ENCODE measurements at regions of chr1 and their contacts with region 1.

Region 1: DNA sequence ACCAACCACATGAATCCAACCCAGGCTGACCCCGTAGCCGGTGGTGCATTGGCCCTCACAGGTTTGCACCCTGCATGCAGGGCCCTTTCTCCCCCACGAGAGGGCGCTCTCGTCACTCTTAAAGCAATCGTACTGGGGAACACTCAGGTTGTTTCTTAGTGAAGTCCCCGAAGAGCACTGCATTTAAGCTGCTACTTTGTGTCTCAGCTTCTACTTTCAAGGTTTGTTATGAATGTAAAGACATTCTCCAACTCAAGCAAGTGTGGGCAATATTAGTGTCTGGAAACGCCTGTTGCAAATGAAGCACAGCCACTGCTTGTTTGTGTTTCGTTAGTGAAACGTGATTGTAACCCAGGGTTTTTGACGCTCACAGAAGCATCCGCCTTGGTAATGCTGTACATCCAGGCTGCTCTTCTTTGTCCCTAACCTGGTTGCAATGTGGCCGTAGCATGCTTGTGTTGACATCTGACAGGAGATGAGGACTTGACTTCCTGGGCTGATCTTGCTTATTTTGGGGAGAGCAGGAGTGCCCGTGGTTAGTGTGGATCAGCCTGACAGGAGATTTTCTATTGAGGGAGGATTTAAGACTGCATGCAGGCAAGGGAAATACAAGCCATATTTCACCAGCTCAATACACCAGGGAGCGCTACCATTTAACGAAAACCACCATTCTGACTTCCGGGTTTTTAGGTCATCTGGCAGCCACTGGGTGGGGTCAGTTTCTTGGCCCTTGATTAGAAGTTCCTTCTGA is 79.8 kb downstream of the ST6GALNAC3 start:
- DNase-seq: peak; percentile 54
- H3K4me3 ChIP-seq: peak overlapping the region in 1 of 2 donors; percentile 2
- H3K27ac ChIP-seq: no peak overlapping the region
- H3K4me1 ChIP-seq: no peaks in the 10 kb centered on the region
- H3K27me3 ChIP-seq: no peaks in the 10 kb centered on the region
- CTCF ChIP-seq: peak; percentile 73 to 89 (median 76)
- POLR2A ChIP-seq: no peak

Region 2: GRCh38 chr1:75991497-75992114 is 162.8 kb before region 1 on chr1:
- intact Hi-C with region 1: loop called (anchors 10 kb)
- DNase-seq: peak; percentile 89
- H3K4me3 ChIP-seq: no peak overlapping the region
- H3K27ac ChIP-seq: no peak overlapping the region
- H3K4me1 ChIP-seq: no peaks in the 10 kb centered on the region
- H3K27me3 ChIP-seq: no peaks in the 10 kb centered on the region
- CTCF ChIP-seq: peak; percentile 68 to 77 (median 73)
- POLR2A ChIP-seq: no peak

Region 3: GRCh38 chr1:76330991-76331603 is 176.7 kb after region 1 on chr1:
- intact Hi-C with region 1: loop called (anchors 10 kb)
- DNase-seq: peak; percentile 17
- H3K4me3 ChIP-seq: no peak overlapping the region
- H3K27ac ChIP-seq: no peak overlapping the region
- H3K4me1 ChIP-seq: no peaks in the 10 kb centered on the region
- H3K27me3 ChIP-seq: no peaks in the 10 kb centered on the region
- CTCF ChIP-seq: peak; percentile 66 to 90 (median 74)
- POLR2A ChIP-seq: no peak

Region 4: GRCh38 chr1:76366726-76367125 is 212.3 kb after region 1 on chr1:
- intact Hi-C with region 1: no loop called
- DNase-seq: no peak
- H3K4me3 ChIP-seq: no peak overlapping the region
- H3K27ac ChIP-seq: no peak overlapping the region
- H3K4me1 ChIP-seq: no peaks in the 10 kb centered on the region
- H3K27me3 ChIP-seq: no peaks in the 10 kb centered on the region
- CTCF ChIP-seq: no peak
- POLR2A ChIP-seq: no peak

Region 5: GRCh38 chr1:76868154-76868882 is 713.9 kb after region 1 on chr1:
- intact Hi-C with region 1: loop called (anchors 10 kb)
- DNase-seq: no peak
- H3K4me3 ChIP-seq: peak overlapping the region; percentile 16 to 17
- H3K27ac ChIP-seq: no peak overlapping the region
- H3K4me1 ChIP-seq: peaks cover 9% of the 10 kb centered on the region
- H3K27me3 ChIP-seq: peaks cover 14% of the 10 kb centered on the region
- CTCF ChIP-seq: peak in 1 of 4 experiments; percentile 8
- POLR2A ChIP-seq: no peak

Region 6: GRCh38 chr1:77126307-77126706 is 971.9 kb after region 1 on chr1:
- intact Hi-C with region 1: loop called (anchors 2 kb)
- DNase-seq: peak; percentile 37
- H3K4me3 ChIP-seq: no peak overlapping the region
- H3K27ac ChIP-seq: no peak overlapping the region
- H3K4me1 ChIP-seq: peaks cover 6% of the 10 kb centered on the region
- H3K27me3 ChIP-seq: no peaks in the 10 kb centered on the region
- CTCF ChIP-seq: peak in 3 of 4 experiments; percentile 23 to 63 (median 53)
- POLR2A ChIP-seq: no peak

Region 7: GRCh38 chr1:77267035-77267434 is 1112.7 kb after region 1 on chr1:
- intact Hi-C with region 1: no loop called
- DNase-seq: no peak
- H3K4me3 ChIP-seq: no peak overlapping the region
- H3K27ac ChIP-seq: no peak overlapping the region
- H3K4me1 ChIP-seq: no peaks in the 10 kb centered on the region
- H3K27me3 ChIP-seq: no peaks in the 10 kb centered on the region
- CTCF ChIP-seq: no peak
- POLR2A ChIP-seq: no peak

Measured in prostate gland (tissue), 2 donors.